OCI-LY7 (cell line): ENCODE measurements at regions of chr6 and their contacts with region 1.

Region 1: GRCh38 chr6:139028658-139029469 is at the start of gene ABRACL:
- DNase-seq: peak; percentile 76
- H3K4me3 ChIP-seq: peak within 1 kb of the TSS; percentile 74
- H3K27ac ChIP-seq: peak within 1 kb of the TSS; percentile 62
- H3K4me1 ChIP-seq: peaks cover 22% of the 10 kb centered on the region
- CTCF ChIP-seq: no peak
- total RNA-seq, gene ABRACL: 69.7 and 70.1 TPM in 2 replicates

Region 2: GRCh38 chr6:138987640-138988468 is 41.0 kb before region 1 on chr6 and contains the start of gene REPS1:
- CTCF ChIA-PET with region 1: interaction called, 3 read pairs
- POLR2A ChIA-PET with region 1: interaction called, 4 read pairs
- intact Hi-C with region 1: loop called (anchors 1 kb)
- DNase-seq: peak; percentile 94
- H3K4me3 ChIP-seq: peak within 1 kb of the TSS; percentile 87
- H3K27ac ChIP-seq: peak within 1 kb of the TSS; percentile 67
- H3K4me1 ChIP-seq: peaks cover 33% of the 10 kb centered on the region
- CTCF ChIP-seq: peak; percentile 90
- total RNA-seq, gene REPS1: 29.0 and 40.0 TPM in 2 replicates

Region 3: GRCh38 chr6:139117734-139118133 is 88.9 kb after region 1 on chr6:
- CTCF ChIA-PET with region 1: no interaction called
- POLR2A ChIA-PET with region 1: no interaction called
- intact Hi-C with region 1: loop called (anchors 5 kb)
- DNase-seq: no peak
- H3K4me3 ChIP-seq: no peak overlapping the region
- H3K27ac ChIP-seq: no peak overlapping the region
- H3K4me1 ChIP-seq: peaks cover 48% of the 10 kb centered on the region
- CTCF ChIP-seq: peak; percentile 55

Region 4: GRCh38 chr6:139161817-139162284 is 133.0 kb after region 1 on chr6:
- CTCF ChIA-PET with region 1: no interaction called
- POLR2A ChIA-PET with region 1: no interaction called
- intact Hi-C with region 1: loop called (anchors 5 kb)
- DNase-seq: peak; percentile 71
- H3K4me3 ChIP-seq: no peak overlapping the region
- H3K27ac ChIP-seq: peak overlapping the region; percentile 55
- H3K4me1 ChIP-seq: peaks cover 53% of the 10 kb centered on the region
- CTCF ChIP-seq: no peak